Mammary epithelial cell (primary cell): ENCODE measurements at regions of chr15 and their contacts with region 1.

Region 1: GRCh38 chr15:101641166-101641764 is 10.9 kb downstream of the TM2D3 start:
- DNase-seq: peak; percentile 44
- H3K4me3 ChIP-seq: no peak overlapping the region
- H3K27ac ChIP-seq: no peak overlapping the region
- H3K4me1 ChIP-seq: peaks cover 12% of the 10 kb centered on the region
- H3K27me3 ChIP-seq: no peaks in the 10 kb centered on the region
- CTCF ChIP-seq: peak; percentile 88 to 95

Region 2: DNA sequence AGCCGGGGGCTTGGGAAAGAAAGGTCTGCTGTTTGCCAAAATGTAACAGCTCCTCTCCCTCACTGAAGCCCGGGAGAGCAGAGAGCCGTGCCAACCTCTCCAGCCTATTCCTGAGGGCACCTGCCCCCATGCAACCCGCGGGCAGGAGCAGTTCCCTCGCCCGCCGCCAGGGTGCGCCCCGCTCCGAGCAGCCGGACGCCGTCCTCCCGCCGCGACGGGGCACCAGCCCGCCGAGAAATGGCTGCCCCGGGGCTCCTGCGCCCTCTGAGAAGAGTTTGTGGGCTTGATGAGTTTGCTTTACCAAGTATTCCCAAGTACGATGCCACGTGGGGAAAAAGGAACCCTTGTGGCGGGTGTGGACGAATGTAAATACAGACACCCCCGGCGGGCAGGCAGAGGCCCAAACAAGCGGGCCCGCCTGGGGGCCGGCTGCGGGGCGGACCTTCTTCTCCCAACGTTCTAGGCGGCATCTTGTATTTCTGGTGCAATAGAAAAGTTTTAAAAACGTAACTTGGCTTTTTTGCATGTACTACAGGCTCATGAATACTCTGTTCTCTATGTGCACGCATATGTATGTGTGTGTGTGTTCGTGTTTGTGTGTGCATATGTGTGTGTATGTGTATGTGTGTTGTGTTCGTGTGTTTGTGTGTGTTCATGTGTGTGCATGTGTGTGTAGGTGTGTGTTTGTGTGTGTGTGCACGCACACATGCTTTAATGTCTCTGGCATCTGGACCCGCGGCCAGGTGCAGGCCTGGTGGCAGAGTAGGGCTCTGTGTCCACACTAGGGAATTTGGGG is 552.3 kb before region 1 on chr15:
- CTCF ChIA-PET with region 1: no interaction called
- dilution Hi-C with region 1: no loop called
- in situ Hi-C with region 1: no loop called
- intact Hi-C with region 1: loop called (anchors 10 kb)
- DNase-seq: peak; percentile 33
- H3K4me3 ChIP-seq: no peak overlapping the region
- H3K27ac ChIP-seq: no peak overlapping the region
- H3K4me1 ChIP-seq: peaks cover 3% of the 10 kb centered on the region
- H3K27me3 ChIP-seq: no peaks in the 10 kb centered on the region
- CTCF ChIP-seq: peak; percentile 93 to 95

Region 3: GRCh38 chr15:101294731-101295606 is 346.3 kb before region 1 on chr15 and contains the start of gene SNRPA1:
- CTCF ChIA-PET with region 1: interaction called, 5 read pairs
- dilution Hi-C with region 1: no loop called
- in situ Hi-C with region 1: no loop called
- intact Hi-C with region 1: loop called (anchors 1 kb)
- DNase-seq: peak; percentile 95
- H3K4me3 ChIP-seq: peak within 1 kb of the TSS; percentile 81 to 97 (median 94)
- H3K27ac ChIP-seq: peak within 1 kb of the TSS; percentile 90
- H3K4me1 ChIP-seq: peaks cover 30% of the 10 kb centered on the region
- H3K27me3 ChIP-seq: no peaks in the 10 kb centered on the region
- CTCF ChIP-seq: no peak
- total RNA-seq, gene SNRPA1: 17.2 to 85.7 TPM

Region 4: DNA sequence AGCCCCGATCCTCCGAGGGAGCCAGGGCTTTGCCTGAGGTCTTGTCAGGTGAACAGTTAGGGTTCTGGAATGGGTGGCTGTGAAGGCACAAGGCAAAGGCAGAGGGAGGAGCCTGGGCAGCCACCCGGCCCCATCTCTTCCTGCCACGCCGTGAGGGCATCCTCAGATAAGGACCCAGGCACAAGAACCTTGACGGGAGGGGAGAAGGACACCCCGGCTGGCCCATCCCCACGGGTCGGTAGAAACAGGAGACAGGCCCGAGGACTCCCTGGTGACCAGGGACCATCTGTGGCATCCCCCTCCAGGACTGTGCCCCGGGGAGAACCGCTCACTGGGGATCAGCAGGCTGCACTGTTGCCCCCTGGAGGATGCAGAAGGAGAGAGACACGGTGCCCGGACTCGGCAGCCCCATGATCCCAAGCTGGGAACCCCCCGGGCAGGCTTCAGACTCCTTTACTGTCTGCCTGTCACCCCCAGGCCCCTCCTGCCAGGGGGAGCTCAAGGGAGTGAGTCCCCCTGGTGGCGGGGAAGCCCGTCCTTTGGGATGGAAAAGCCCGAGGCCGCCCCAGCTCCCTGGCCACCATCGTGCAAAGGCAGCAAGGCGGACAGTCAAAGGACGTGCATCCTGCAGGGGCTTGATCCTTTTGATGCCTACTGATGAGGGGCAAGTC is 139.4 kb before region 1 on chr15:
- CTCF ChIA-PET with region 1: no interaction called
- dilution Hi-C with region 1: no loop called
- in situ Hi-C with region 1: no loop called
- intact Hi-C with region 1: loop called (anchors 5 kb)
- DNase-seq: no peak
- H3K4me3 ChIP-seq: no peak overlapping the region
- H3K27ac ChIP-seq: no peak overlapping the region
- H3K4me1 ChIP-seq: no peaks in the 10 kb centered on the region
- H3K27me3 ChIP-seq: no peaks in the 10 kb centered on the region
- CTCF ChIP-seq: peak in 1 of 2 donors; percentile 36

Region 5: DNA sequence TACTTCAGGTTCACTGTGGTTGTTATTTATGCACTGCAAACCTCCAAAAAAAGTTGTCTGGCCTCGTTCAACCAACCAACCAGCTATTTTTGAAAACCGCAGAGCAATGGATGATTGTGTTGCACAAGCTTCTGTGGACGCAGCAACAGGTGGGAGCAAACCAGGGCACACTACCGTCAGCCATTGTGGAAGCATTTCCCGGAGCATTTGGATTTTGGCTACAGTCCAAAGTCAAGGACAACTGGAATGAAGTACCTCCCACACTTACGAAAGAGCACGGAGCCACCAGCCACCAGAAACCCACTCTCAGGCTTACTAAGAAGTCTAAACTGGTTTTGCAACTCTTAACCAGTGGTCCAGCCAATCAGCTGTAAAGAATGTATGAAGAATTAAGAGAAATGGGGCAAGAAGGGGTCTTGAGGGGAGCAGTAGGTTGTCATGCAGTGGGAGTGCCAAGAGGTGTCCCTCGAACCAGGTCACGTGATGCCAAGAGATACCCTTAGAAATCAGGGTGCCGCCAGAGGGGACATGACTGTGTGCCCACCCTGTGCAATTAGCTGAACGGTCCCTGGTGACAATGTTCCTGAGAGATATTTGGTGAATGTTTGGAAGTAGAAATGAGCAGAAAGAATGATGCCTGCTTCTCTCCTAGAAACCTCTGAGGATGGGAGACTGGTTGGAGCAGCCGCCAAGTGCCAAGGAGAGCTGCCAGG is 82.9 kb before region 1 on chr15:
- CTCF ChIA-PET with region 1: no interaction called
- dilution Hi-C with region 1: no loop called
- in situ Hi-C with region 1: no loop called
- intact Hi-C with region 1: no loop called
- DNase-seq: no peak
- H3K4me3 ChIP-seq: no peak overlapping the region
- H3K27ac ChIP-seq: no peak overlapping the region
- H3K4me1 ChIP-seq: no peaks in the 10 kb centered on the region
- H3K27me3 ChIP-seq: no peaks in the 10 kb centered on the region
- CTCF ChIP-seq: no peak

Region 6: DNA sequence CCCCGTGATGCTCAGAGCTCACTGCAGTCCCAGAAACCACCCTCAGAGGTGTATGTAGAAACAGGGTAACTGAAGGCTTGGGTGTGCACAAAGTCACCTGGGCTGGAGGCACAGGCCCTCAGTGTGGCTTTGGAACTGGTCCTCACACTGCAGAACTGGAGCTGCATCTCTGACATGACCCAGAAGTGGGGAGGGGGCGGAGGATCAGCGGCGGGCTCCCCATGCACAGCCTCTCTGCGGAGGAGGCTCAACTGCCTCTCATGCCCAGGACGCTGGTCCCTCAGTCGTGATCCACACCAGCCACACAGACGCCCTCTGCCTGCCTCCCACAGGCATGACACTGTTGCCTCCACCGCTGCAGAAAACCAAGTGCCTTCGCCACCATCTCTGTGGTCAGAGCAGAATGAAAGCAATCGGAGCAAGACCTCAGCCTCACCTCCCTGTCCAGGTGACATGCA is 62.8 kb before region 1 on chr15:
- CTCF ChIA-PET with region 1: no interaction called
- dilution Hi-C with region 1: no loop called
- in situ Hi-C with region 1: no loop called
- intact Hi-C with region 1: loop called (anchors 2 kb)
- DNase-seq: peak; percentile 28
- H3K4me3 ChIP-seq: no peak overlapping the region
- H3K27ac ChIP-seq: no peak overlapping the region
- H3K4me1 ChIP-seq: peaks cover 5% of the 10 kb centered on the region
- H3K27me3 ChIP-seq: no peaks in the 10 kb centered on the region
- CTCF ChIP-seq: peak; percentile 55 to 77

Region 7: DNA sequence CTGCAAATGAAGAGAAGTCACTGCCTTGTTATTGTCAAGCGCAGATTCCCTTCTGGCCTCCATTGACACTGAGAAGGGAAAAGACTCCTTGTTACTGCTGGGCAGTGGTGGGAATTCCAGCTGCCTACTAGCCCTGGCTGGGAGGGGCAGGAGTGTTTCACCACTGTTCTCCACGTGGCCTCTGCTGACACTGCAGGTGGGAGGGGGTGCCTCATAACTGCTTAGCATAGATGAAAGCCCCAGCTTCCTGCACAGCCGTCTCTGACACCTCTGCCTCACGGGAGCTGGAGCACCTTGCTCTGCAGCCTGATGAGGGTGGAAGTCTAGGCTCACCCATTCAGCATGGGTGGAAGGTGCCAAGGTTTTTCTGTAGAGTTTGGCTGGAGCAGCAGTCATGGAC is 41.2 kb before region 1 on chr15:
- CTCF ChIA-PET with region 1: no interaction called
- dilution Hi-C with region 1: no loop called
- in situ Hi-C with region 1: no loop called
- intact Hi-C with region 1: no loop called
- DNase-seq: no peak
- H3K4me3 ChIP-seq: no peak overlapping the region
- H3K27ac ChIP-seq: no peak overlapping the region
- H3K4me1 ChIP-seq: no peaks in the 10 kb centered on the region
- H3K27me3 ChIP-seq: peaks cover 3% of the 10 kb centered on the region
- CTCF ChIP-seq: no peak

Region 8: DNA sequence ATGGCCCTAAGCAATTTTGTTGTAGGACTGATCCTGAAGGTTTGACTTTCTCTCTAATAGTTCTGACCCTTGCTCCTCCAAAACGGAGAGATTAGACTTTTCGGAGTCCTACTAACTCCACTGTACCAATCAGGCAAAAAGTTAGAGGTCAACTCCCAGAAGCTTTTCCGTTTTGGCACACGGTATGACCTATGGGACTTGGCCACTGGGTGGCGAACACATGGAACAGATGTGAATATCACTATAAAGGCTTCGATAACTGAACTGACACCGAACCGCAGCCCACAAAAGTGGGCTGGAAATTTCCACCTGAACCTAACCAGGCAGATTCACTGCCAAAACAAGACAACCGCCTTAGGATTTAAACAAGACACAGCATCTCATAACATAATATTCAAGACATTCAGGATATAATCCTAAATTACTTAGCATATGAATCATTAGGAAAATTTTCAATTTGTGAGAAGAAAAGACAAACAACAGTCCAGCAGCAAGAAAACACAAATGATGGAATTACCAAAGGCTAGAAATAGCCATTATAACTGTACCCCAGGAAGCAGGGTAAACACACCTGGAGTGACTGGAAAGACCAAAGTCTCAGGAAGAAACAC is 23.1 kb after region 1 on chr15:
- CTCF ChIA-PET with region 1: no interaction called
- dilution Hi-C with region 1: no loop called
- in situ Hi-C with region 1: no loop called
- intact Hi-C with region 1: no loop called
- DNase-seq: no peak
- H3K4me3 ChIP-seq: no peak overlapping the region
- H3K27ac ChIP-seq: no peak overlapping the region
- H3K4me1 ChIP-seq: no peaks in the 10 kb centered on the region
- H3K27me3 ChIP-seq: no peaks in the 10 kb centered on the region
- CTCF ChIP-seq: peak; percentile 31 to 32